ENCODE measurements at regions of chr2 and their contacts with region 1.

Region 1: GRCh38 chr2:219581411-219581810 is 9.3 kb downstream of the INHA start:
- DNase-seq: no peak
- H3K4me3 Mint-ChIP-seq: no peak overlapping the region
- H3K27ac Mint-ChIP-seq: no peak overlapping the region
- H3K4me1 Mint-ChIP-seq: no peaks in the 10 kb centered on the region
- H3K27me3 Mint-ChIP-seq: peaks cover 17% of the 10 kb centered on the region

Region 2: GRCh38 chr2:218788529-218789255 is 792.7 kb before region 1 on chr2:
- intact Hi-C with region 1: loop called (anchors 5 kb)
- DNase-seq: no peak
- H3K4me3 Mint-ChIP-seq: no peak overlapping the region
- H3K27ac Mint-ChIP-seq: no peak overlapping the region
- H3K4me1 Mint-ChIP-seq: no peaks in the 10 kb centered on the region
- H3K27me3 Mint-ChIP-seq: peaks cover 29% of the 10 kb centered on the region